Cardiac septum (tissue), 1 donor: ENCODE measurements at regions of chr6 and their contacts with region 1.

Region 1: DNA sequence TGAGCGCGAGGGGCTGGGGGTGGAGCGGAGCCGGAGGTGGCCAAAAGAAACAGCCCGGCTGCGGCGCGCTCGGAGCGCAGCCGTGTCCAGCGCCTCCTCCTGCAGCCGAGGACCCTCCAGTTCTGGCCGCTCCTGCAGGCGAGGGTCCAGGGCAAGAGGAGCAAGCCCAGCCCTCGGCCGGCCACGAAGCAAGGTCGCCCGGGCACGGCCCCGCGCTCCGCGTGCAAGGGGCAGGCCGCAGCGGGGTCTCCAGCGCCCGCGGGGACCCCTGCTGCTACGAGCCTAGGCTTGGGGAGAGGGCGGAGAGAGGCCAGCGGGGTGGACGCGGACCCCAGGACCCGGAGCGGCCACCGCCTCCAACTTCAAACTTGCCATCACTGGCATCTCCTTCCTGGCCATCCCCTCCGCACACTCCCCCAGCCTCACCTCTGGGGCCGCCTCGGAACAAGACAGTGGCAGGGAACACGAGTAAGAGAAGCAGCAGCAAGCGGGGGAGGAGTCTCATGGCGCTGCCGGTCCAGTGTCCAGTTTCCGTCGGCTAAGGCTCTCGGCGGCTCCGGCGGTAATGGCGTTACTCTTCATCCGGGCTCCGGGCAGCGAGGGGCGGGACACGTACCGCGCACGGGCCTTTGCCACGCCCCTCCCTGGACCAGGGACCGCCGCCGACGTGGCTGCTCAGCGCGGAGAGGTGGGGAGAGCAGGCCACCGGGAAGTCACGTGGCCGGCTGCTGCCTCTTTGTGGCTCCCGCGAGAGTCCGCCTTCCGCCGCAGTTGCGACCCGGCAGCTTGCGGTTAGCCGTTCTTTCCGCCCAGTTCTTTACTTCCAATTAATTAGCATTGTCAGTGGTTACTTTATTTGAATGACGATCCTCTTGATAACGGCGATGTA is at the start of gene SSR1:
- DNase-seq: peak; percentile 99
- total RNA-seq, gene SSR1: 61.8 TPM

Region 2: GRCh38 chr6:7389451-7390225 is 76.8 kb after region 1 on chr6 and contains the starts of genes CAGE1 and RIOK1:
- intact Hi-C with region 1: loop called (anchors 1 kb)
- DNase-seq: peak; percentile 97
- total RNA-seq, gene CAGE1: not detected
- total RNA-seq, gene RIOK1: 11.9 TPM

Region 3: DNA sequence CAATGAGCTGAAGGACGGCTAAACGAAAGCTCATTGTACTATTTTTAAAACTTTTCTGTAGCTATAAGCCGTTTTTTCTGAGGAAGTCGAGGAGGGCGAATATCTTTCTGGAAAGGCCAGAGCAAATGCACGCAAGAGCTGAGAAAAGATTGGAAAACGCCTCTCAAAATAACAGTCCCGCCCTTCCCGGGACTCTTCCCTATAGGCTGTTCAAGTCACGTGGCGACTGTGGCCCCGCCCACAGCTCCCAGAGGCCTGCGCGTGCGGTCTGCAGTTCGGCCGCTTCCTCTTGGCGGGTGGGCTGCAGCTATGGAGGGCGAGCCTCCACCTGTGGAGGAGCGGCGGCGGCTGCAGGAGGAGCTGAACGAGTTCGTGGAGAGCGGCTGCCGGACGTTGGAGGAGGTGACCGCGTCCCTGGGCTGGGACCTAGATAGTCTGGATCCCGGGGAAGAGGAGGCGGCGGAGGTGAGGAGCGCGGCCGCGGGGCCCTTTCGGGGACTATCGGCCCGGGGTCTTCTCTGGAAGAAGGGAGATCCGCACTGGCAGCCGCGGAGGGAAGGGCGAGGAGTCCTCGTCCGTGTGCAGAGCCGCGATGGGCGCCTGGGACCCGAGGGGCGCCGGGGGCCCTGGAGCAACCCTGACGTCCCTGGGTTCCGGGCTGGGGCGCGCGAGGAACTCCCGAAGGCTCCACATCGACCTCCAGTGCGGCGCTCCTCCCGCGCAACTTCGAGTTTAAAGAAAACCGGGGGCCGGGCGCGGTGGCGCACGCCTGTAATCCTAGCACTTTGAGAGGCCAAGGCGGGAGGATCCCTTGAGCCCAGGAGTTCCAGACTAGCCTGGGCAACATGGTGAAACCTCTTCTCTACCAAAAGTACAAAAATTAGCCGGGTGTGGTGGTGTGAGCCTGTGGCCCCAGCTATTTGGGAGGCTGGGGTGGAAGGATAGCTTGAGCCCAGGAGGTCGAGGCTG is 277.4 kb after region 1 on chr6 and contains the start of gene SNRNP48:
- intact Hi-C with region 1: loop called (anchors 2 kb)
- DNase-seq: peak; percentile 97
- total RNA-seq, gene SNRNP48: 13.4 TPM